CD8-positive, alpha-beta T cell (primary cell): ENCODE measurements at regions of chr10 and their contacts with region 1.

Region 1: GRCh38 chr10:28532383-28533175 is at the start of gene WAC:
- DNase-seq: peak; percentile 94 to 99 (median 97)
- ATAC-seq: peak; percentile 79
- H3K4me3 ChIP-seq: peak within 1 kb of the TSS; percentile 74 to 99
- H3K4me3 Mint-ChIP-seq: peak within 1 kb of the TSS; percentile 99
- H3K27ac ChIP-seq: peak within 1 kb of the TSS; percentile 95 to 99
- H3K27ac Mint-ChIP-seq: peak within 1 kb of the TSS; percentile 100
- H3K4me1 ChIP-seq: peaks cover 47% of the 10 kb centered on the region
- H3K4me1 Mint-ChIP-seq: peaks cover 69% of the 10 kb centered on the region
- H3K27me3 ChIP-seq: no peaks in the 10 kb centered on the region
- H3K27me3 Mint-ChIP-seq: no peaks in the 10 kb centered on the region
- CTCF ChIP-seq: no peak
- total RNA-seq, gene WAC: 195 to 200 TPM

Region 2: GRCh38 chr10:27155066-27155754 is 1377.4 kb before region 1 on chr10 and contains the start of gene MASTL:
- CTCF ChIA-PET with region 1: no interaction called
- POLR2A ChIA-PET with region 1: interaction called, 4 read pairs
- intact Hi-C with region 1: loop called (anchors 1 kb)
- DNase-seq: peak; percentile 90 to 98 (median 93)
- ATAC-seq: peak; percentile 82
- H3K4me3 ChIP-seq: peak within 1 kb of the TSS; percentile 84 to 98
- H3K4me3 Mint-ChIP-seq: peak within 1 kb of the TSS; percentile 99
- H3K27ac ChIP-seq: peak within 1 kb of the TSS; percentile 100
- H3K27ac Mint-ChIP-seq: peak within 1 kb of the TSS; percentile 100
- H3K4me1 ChIP-seq: peaks cover 27% of the 10 kb centered on the region
- H3K4me1 Mint-ChIP-seq: peaks cover 49% of the 10 kb centered on the region
- H3K27me3 ChIP-seq: no peaks in the 10 kb centered on the region
- H3K27me3 Mint-ChIP-seq: no peaks in the 10 kb centered on the region
- CTCF ChIP-seq: no peak
- total RNA-seq, gene MASTL: 33.4 to 33.6 TPM

Region 3: GRCh38 chr10:28334296-28334695 is 198.3 kb before region 1 on chr10:
- CTCF ChIA-PET with region 1: no interaction called
- POLR2A ChIA-PET with region 1: interaction called, 6 read pairs
- intact Hi-C with region 1: loop called (anchors 1 to 10 kb)
- DNase-seq: peak in 8 of 9 experiments; percentile 14 to 98 (median 50)
- ATAC-seq: peak; percentile 61
- H3K4me3 ChIP-seq: peak overlapping the region; percentile 60 to 67
- H3K4me3 Mint-ChIP-seq: peak overlapping the region; percentile 95
- H3K27ac ChIP-seq: peak overlapping the region; percentile 96 to 98
- H3K27ac Mint-ChIP-seq: peak overlapping the region; percentile 100
- H3K4me1 ChIP-seq: peaks cover 64% of the 10 kb centered on the region
- H3K4me1 Mint-ChIP-seq: peaks cover 74% of the 10 kb centered on the region
- H3K27me3 ChIP-seq: no peaks in the 10 kb centered on the region
- H3K27me3 Mint-ChIP-seq: no peaks in the 10 kb centered on the region
- CTCF ChIP-seq: no peak

Region 4: DNA sequence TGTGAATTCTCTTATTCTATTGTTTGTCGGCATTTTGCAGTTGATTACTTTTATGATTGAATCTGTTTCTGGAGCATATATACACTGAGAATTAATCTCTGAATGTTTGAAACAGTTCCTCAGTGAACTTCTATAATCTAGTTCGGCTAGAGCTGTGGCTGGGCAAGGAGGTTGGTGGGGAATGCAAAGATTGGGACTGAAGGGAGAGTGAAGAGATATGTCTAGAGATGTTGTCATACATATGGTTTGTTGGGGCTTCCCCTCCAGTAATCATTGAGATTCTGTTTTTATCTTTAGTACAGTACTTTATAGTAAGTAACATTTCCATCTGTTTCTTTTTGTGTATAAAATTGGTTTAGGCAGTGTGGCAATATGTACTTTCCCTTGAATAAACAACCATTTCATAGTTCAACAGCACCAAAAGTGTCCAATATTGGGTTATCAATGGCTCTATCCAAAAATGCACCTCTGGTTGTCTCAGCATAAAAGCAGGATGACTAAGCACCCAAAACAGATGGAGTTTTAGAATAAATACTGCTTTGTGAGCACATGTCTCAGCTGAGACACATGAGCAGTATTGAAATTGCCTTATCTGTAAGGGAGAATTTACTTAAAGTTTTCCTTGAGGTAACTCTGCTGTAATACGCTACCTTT is 37.1 kb after region 1 on chr10:
- CTCF ChIA-PET with region 1: no interaction called
- POLR2A ChIA-PET with region 1: interaction called, 3 read pairs
- intact Hi-C with region 1: loop called in 1 of 2 experiments (anchors 2 kb)
- DNase-seq: no peak
- ATAC-seq: no peak
- H3K4me3 ChIP-seq: no peak overlapping the region
- H3K4me3 Mint-ChIP-seq: peak overlapping the region; percentile 6
- H3K27ac ChIP-seq: no peak overlapping the region
- H3K27ac Mint-ChIP-seq: peak overlapping the region; percentile 29
- H3K4me1 ChIP-seq: peaks cover 64% of the 10 kb centered on the region
- H3K4me1 Mint-ChIP-seq: peaks cover 87% of the 10 kb centered on the region
- H3K27me3 ChIP-seq: no peaks in the 10 kb centered on the region
- H3K27me3 Mint-ChIP-seq: no peaks in the 10 kb centered on the region
- CTCF ChIP-seq: no peak

Region 5: GRCh38 chr10:28676968-28677887 is 144.6 kb after region 1 on chr10 and contains the start of gene BAMBI:
- CTCF ChIA-PET with region 1: no interaction called
- POLR2A ChIA-PET with region 1: no interaction called
- intact Hi-C with region 1: loop called (anchors 5 kb)
- DNase-seq: peak; percentile 76 to 95 (median 88)
- ATAC-seq: peak; percentile 96
- H3K4me3 ChIP-seq: peak within 1 kb of the TSS; percentile 53 to 59
- H3K4me3 Mint-ChIP-seq: peak within 1 kb of the TSS; percentile 86
- H3K27ac ChIP-seq: no peak within 1 kb of the TSS
- H3K27ac Mint-ChIP-seq: no peak within 1 kb of the TSS
- H3K4me1 ChIP-seq: peaks cover 34% of the 10 kb centered on the region
- H3K4me1 Mint-ChIP-seq: peaks cover 31% of the 10 kb centered on the region
- H3K27me3 ChIP-seq: peaks cover 19 to 20% of the 10 kb centered on the region in 2 experiments
- H3K27me3 Mint-ChIP-seq: peaks cover 68% of the 10 kb centered on the region
- CTCF ChIP-seq: peak; percentile 40
- total RNA-seq, gene BAMBI: 3.5 to 3.6 TPM